ENCODE measurements at regions of chr5 and their contacts with region 1.

Region 1: GRCh38 chr5:135551593-135552447 is 16.1 kb upstream of the NEUROG1 start:
- DNase-seq: peak; percentile 79
- H3K4me3 Mint-ChIP-seq: no peak overlapping the region
- H3K27ac Mint-ChIP-seq: no peak overlapping the region
- H3K4me1 Mint-ChIP-seq: peaks cover 8% of the 10 kb centered on the region
- H3K27me3 Mint-ChIP-seq: peaks cover 76% of the 10 kb centered on the region
- CTCF ChIP-seq: peak; percentile 82

Region 2: DNA sequence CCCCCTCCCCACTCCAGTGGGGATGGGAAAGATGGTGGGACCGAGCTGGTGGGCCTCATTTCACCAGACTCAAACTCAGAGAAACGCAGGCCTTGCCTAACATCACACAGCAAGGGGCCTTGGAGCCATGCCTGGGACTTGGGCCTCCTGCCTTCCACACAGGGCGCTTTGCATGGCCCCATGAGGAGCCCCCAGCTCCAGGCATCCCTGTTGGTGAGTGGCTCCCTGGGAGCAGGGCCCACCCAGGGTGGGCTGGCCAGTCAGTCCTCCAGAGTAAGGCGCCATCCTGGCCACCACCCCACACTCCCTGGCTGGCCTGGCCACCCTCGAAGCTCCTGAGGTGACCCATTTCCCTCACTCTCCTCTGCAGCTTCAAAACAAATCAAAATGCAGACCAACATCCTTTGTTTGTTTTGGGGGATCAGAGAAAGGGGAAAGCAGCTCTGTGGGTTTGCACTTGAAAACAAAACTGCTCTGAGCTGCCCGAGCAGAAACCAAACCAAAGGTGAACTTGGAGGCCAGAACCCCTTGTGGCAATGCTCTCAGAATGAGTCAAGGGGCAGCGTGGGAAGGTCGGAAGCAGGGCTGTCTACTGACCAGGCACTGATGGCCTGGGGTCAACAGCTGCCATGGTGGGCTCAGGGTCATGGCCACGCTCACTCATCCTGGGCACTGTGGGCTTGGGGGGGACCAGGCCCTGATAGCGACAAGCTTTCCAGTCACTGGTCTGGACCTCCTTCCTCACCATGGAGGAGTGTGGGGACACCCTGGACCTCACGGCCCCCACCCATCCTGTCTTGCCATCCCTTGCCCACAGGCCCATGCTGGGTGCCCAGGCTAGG is 1510.0 kb before region 1 on chr5:
- CTCF ChIA-PET with region 1: no interaction called
- intact Hi-C with region 1: no loop called
- DNase-seq: no peak
- H3K4me3 Mint-ChIP-seq: no peak overlapping the region
- H3K27ac Mint-ChIP-seq: no peak overlapping the region
- H3K4me1 Mint-ChIP-seq: peaks cover 23% of the 10 kb centered on the region
- H3K27me3 Mint-ChIP-seq: no peaks in the 10 kb centered on the region
- CTCF ChIP-seq: no peak

Region 3: DNA sequence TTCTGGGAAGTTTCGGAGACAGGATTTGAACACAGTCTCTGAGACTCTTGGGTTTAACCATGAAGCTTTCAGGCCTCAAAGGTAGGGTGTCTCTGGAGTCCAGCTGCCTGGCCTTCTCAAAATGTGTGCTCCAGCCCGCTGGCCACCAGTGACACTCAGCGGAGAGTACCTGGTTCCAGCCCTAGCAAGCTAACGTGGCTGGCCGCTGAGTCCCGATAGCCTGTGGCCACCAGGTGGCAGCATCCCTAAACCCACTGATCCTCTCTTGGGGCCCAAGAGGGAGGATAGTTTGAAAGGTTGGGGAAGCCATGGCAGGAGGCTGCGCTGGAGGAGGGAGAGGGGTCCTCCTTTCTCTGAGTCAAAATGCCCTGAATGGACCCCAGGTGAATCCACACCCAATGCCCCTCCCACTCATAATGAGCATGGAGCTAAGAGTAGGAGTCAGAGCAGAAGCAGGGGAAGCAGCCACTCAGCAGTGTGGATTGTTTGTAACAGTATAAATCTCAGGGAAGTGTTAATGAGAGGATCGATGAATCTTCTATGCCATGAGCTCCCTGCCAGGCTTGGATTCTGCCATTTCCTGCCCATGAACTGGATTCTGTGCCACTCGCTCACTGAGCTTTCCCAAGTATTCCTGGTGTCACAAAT is 94.3 kb before region 1 on chr5:
- CTCF ChIA-PET with region 1: interaction called, 32 read pairs
- intact Hi-C with region 1: loop called (anchors 1 kb)
- DNase-seq: peak; percentile 82
- H3K4me3 Mint-ChIP-seq: no peak overlapping the region
- H3K27ac Mint-ChIP-seq: no peak overlapping the region
- H3K4me1 Mint-ChIP-seq: peaks cover 15% of the 10 kb centered on the region
- H3K27me3 Mint-ChIP-seq: peaks cover 48% of the 10 kb centered on the region
- CTCF ChIP-seq: peak; percentile 82

Region 4: GRCh38 chr5:135466178-135467050 is 85.4 kb before region 1 on chr5:
- CTCF ChIA-PET with region 1: interaction called, 101 read pairs
- intact Hi-C with region 1: loop called (anchors 1 kb)
- DNase-seq: peak; percentile 87
- H3K4me3 Mint-ChIP-seq: peak overlapping the region; percentile 51
- H3K27ac Mint-ChIP-seq: no peak overlapping the region
- H3K4me1 Mint-ChIP-seq: peaks cover 8% of the 10 kb centered on the region
- H3K27me3 Mint-ChIP-seq: peaks cover 14% of the 10 kb centered on the region
- CTCF ChIP-seq: peak; percentile 88

Region 5: DNA sequence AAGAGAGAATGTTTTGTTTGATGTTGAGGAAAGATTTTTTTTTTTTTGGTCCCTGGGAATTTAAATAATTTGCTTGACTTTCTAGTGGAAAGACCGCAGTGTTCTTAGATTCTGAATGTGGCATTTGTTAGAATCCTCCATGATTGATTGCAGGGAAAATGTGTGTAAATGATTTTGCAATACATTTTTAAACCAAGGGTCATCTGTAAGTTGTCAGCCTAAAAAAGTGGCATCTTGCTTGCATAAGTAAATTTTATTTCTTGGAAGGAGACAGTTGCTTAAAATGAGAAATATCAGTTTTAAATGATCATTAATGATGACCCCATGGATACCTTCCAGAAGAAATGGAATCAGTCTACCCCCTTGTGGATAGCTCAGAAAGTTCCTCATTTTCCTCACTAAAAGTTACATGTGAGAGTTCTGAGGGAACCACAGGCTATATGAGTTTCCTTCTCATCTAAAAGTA is 177.5 kb after region 1 on chr5:
- CTCF ChIA-PET with region 1: interaction called, 14 read pairs
- intact Hi-C with region 1: no loop called
- DNase-seq: no peak
- H3K4me3 Mint-ChIP-seq: no peak overlapping the region
- H3K27ac Mint-ChIP-seq: no peak overlapping the region
- H3K4me1 Mint-ChIP-seq: no peaks in the 10 kb centered on the region
- H3K27me3 Mint-ChIP-seq: peaks cover 26% of the 10 kb centered on the region
- CTCF ChIP-seq: no peak

Region 6: DNA sequence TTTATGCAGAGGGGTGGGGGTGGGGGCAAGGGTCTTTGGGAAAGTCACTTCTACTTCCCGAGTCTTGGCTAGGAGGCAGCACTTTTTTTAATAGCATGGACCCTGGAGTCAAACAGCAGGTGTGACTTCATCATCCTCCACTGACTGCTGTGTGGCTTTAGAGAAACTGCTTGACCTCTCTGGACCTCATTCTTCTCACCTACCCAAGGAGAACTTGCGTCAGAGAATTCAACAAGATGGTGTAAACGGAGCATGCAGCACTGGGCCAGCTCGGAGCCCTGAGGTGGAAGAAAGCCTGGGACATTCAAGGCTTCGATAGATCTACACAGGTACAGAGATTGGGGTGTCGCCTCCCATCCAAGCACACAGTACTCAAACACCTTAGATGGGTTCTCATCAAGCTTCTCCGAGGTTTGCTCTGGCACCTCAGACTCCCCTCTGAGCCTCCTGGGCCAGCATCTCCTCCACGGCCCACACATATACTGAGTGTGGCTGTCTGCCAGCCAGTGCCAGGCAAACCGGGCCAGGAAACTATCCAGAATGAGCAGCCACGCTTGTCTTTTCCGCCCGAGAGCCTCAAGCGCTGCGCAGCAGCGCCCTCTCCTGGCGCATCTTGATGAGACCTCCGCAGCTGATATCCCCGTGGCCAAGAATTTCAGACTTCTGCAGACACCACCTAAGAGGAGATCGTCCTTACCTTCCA is 278.0 kb after region 1 on chr5:
- CTCF ChIA-PET with region 1: interaction called, 27 read pairs
- intact Hi-C with region 1: loop called (anchors 2 kb)
- DNase-seq: peak; percentile 75
- H3K4me3 Mint-ChIP-seq: no peak overlapping the region
- H3K27ac Mint-ChIP-seq: no peak overlapping the region
- H3K4me1 Mint-ChIP-seq: no peaks in the 10 kb centered on the region
- H3K27me3 Mint-ChIP-seq: peaks cover 92% of the 10 kb centered on the region
- CTCF ChIP-seq: peak; percentile 94

Measured in Calu3 (cell line).